Transverse colon (tissue), 4 donors: ENCODE measurements at regions of chr2 and their contacts with region 1.

Region 1: GRCh38 chr2:71558300-71559051 is 105.1 kb downstream of the DYSF start:
- DNase-seq: no peak
- H3K4me3 ChIP-seq: no peak overlapping the region
- H3K27ac ChIP-seq: no peak overlapping the region
- H3K4me1 ChIP-seq: no peaks in the 10 kb centered on the region
- H3K27me3 ChIP-seq: no peaks in the 10 kb centered on the region
- CTCF ChIP-seq: no peak
- EP300 ChIP-seq: no peak
- POLR2A ChIP-seq: no peak

Region 2: DNA sequence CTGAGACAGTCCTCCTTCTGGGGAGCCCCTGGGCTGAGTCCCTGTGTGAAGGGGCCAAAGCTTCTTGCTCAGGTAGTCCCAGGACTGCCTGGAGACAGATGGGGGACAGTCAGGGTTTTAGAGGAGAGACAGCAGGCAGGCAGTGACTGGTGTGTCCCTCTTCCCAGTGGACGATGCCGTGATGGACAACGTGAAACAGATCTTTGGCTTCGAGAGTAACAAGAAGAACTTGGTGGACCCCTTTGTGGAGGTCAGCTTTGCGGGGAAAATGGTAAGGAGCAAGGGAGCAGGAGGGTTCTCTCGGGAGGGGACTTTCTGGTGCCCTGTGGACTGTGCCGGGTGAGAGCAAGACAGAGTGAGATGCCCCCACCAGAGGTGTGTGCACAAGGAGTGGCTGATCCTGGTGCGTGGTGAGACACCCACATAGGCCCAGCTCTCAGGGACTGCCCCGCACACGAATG is 30.3 kb before region 1 on chr2:
- in situ Hi-C with region 1: no loop called
- intact Hi-C with region 1: no loop called
- DNase-seq: no peak
- H3K4me3 ChIP-seq: no peak overlapping the region
- H3K27ac ChIP-seq: no peak overlapping the region
- H3K4me1 ChIP-seq: no peaks in the 10 kb centered on the region
- H3K27me3 ChIP-seq: no peaks in the 10 kb centered on the region
- CTCF ChIP-seq: no peak
- EP300 ChIP-seq: no peak
- POLR2A ChIP-seq: no peak

Region 3: GRCh38 chr2:71995067-71995665 is 436.7 kb after region 1 on chr2:
- in situ Hi-C with region 1: no loop called
- intact Hi-C with region 1: loop called (anchors 10 kb)
- DNase-seq: no peak
- H3K4me3 ChIP-seq: no peak overlapping the region
- H3K27ac ChIP-seq: no peak overlapping the region
- H3K4me1 ChIP-seq: no peaks in the 10 kb centered on the region
- H3K27me3 ChIP-seq: no peaks in the 10 kb centered on the region
- CTCF ChIP-seq: peak in 3 of 5 experiments; percentile 22 to 37 (median 26)
- EP300 ChIP-seq: no peak
- POLR2A ChIP-seq: no peak

Region 4: DNA sequence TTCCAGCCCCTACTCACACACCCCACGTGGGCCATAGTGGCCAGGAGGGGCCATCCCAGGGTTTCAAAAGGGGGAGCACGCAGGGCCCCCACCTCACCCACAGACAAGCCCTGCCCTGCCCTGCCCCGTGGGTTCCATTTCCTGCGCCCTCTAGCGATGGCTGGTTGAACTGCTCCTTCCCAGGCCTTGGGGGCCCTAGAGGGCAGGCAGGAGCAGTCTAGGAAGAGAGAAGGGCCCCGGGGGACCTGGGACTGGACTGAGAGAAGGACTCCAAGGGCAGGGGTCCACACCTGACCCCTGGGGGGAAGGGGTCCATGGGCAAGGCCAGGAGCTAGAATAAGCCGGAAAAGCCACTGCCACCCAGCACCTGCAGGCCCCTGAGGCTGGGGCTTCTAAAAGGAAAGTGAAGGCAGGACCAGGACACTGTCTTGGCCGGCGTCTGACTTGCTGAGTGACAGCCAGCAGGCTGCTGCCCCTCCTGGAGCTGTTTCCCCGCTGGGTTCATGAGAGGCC is 579.1 kb after region 1 on chr2:
- in situ Hi-C with region 1: loop called in 1 of 4 experiments (anchors 25 kb)
- intact Hi-C with region 1: no loop called
- DNase-seq: peak; percentile 70
- H3K4me3 ChIP-seq: no peak overlapping the region
- H3K27ac ChIP-seq: no peak overlapping the region
- H3K4me1 ChIP-seq: peaks cover 13 to 19% (median 15%) of the 10 kb centered on the region in 4 donors
- H3K27me3 ChIP-seq: peaks cover 4% of the 10 kb centered on the region
- CTCF ChIP-seq: peak; percentile 81 to 95 (median 91)
- EP300 ChIP-seq: no peak
- POLR2A ChIP-seq: no peak